ENCODE measurements at regions of chr12 and their contacts with region 1.

Region 1: DNA sequence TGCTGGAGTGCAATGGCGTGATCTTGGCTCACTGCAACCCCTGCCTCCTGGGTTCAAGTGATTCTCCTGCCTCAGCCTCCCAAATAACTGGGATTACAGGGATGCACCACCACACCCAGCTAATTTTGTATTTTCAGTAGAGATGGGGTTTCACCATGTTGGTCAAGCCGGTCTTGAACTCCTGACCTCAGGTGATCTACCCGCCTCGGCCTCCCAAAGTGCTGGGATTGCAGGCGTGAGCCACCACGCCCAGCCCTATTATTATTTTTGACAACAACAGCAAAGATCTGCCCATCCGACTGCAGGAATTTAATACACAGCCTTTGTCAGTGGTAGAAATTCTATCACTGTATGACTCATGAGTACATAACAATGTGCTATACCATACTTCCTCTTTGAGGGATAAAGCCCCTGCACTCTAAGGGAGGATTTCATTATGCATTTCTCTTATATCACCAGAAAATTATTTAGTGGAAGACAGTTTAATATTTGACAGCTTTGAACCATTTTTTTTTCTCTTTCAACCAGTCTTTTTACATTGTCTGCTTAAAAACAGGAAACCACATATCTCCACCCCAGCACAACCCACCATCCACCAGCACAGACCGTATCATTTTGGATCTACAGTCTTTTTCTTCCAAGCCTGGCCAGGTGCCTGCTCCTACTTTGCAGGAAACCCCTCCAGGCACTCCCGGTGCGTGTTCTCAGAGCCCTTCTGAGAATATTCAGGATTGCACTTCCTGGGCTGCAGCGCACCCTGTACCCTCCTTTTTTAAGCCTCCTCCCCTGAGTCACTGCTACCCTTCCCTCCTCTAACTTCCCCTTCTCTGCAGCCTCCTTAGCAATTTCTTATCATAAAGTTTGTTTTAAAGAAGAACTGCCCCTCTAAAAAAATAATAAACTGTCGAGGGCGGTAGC is 594 bp downstream of the ARHGDIB start:
- DNase-seq: peak; percentile 39
- H3K4me3 Mint-ChIP-seq: peak overlapping the region; percentile 98
- H3K27ac Mint-ChIP-seq: peak overlapping the region; percentile 100
- H3K4me1 Mint-ChIP-seq: peaks cover 43% of the 10 kb centered on the region
- H3K27me3 Mint-ChIP-seq: no peaks in the 10 kb centered on the region

Region 2: GRCh38 chr12:13196130-13196921 is 1764.5 kb before region 1 on chr12 and contains the start of gene EMP1:
- CTCF ChIA-PET with region 1: no interaction called
- intact Hi-C with region 1: loop called (anchors 5 kb)
- DNase-seq: peak; percentile 93
- H3K4me3 Mint-ChIP-seq: peak within 1 kb of the TSS; percentile 72
- H3K27ac Mint-ChIP-seq: peak within 1 kb of the TSS; percentile 38
- H3K4me1 Mint-ChIP-seq: peaks cover 20% of the 10 kb centered on the region
- H3K27me3 Mint-ChIP-seq: peaks cover 4% of the 10 kb centered on the region
- total RNA-seq, gene EMP1: 3.0 to 4.0 TPM

Region 3: DNA sequence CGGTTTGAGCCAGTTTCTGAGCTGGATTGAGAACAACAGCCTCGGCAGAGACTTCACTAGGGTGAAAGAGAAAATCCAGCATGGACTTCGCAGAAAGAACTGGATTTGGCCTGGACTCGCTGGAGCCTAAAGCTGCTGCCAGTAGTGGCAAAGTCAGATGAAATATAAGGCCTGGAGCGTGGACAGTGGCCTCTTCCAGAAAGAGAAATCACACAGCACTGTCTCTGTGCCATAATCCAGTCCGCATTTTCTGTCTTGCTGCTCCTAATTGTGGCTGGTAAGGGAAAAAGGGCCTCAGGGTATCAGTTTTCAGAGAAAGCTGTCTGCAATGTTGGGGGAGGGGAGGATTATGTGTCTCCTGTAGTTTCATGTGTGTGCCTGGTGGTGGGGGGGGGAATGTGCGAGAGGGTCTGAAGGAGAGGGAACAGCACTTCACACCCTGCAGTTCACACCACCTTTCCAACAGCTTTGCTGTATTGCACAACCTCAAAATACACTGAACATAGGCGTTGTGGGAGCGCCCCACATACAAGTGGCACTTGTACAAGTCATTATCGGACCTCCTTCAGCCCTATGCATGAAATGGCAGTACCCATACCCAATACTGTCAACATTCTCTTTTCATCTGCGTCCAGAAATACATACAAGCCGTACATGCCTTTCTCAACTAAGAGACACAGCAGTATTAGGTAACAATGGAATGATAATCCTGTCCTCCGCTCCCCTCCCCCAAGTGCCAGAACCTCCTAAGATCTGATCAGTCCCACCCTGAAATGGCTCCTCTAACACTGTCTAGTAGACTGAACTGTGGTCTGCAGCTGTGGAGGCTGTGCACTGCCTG is 702.9 kb before region 1 on chr12:
- CTCF ChIA-PET with region 1: no interaction called
- intact Hi-C with region 1: loop called (anchors 1 kb)
- DNase-seq: peak; percentile 99
- H3K4me3 Mint-ChIP-seq: peak overlapping the region; percentile 73
- H3K27ac Mint-ChIP-seq: peak overlapping the region; percentile 98
- H3K4me1 Mint-ChIP-seq: peaks cover 53% of the 10 kb centered on the region
- H3K27me3 Mint-ChIP-seq: no peaks in the 10 kb centered on the region

Region 4: GRCh38 chr12:14394317-14395073 is 566.3 kb before region 1 on chr12:
- CTCF ChIA-PET with region 1: no interaction called
- intact Hi-C with region 1: loop called (anchors 2 kb)
- DNase-seq: peak; percentile 62
- H3K4me3 Mint-ChIP-seq: peak overlapping the region; percentile 77
- H3K27ac Mint-ChIP-seq: peak overlapping the region; percentile 98
- H3K4me1 Mint-ChIP-seq: peaks cover 82% of the 10 kb centered on the region
- H3K27me3 Mint-ChIP-seq: no peaks in the 10 kb centered on the region

Region 5: DNA sequence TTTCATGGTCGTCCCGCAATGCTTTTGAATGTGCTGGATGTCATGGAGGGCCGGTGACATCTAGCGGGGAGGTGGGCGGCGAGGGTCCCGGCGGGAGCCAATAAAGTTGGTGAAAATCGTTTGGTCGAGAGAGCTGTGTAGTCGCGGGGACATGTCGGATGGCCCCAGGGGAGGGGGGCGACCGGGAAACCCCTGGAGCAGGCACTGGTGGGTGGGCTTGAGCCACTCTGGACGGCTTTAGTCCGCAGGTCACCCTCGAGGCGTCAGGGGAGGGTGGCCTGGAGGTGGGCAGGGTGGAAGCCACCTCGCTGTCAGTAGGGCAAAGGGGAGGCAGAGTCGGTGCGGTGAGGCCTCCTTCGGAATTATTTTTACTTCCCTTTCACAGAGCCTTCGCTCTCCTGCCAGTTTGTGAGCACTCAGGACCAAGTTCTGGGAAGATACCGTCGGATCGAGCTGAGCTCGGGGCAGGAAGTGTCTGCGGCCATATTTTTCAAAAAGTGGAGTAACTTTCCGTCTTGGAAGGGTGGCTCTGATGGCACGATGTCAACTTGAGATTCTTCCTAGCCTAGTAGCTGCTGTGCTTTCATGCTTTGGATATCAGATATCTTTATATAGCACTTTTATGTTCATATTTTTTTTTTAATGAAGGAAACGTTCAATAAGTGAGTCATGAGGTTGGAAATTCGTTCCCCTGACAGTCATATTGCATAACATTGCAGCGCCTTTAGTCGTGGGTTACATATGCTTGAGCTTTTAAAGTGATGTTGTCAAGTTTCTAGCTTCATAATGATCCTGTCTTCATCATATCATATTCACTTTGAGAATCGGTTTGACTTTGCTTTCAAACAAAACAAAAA is 185.7 kb before region 1 on chr12:
- CTCF ChIA-PET with region 1: interaction called, 3 read pairs
- intact Hi-C with region 1: loop called (anchors 1 kb)
- DNase-seq: peak; percentile 58
- H3K4me3 Mint-ChIP-seq: peak overlapping the region; percentile 95
- H3K27ac Mint-ChIP-seq: peak overlapping the region; percentile 94
- H3K4me1 Mint-ChIP-seq: peaks cover 36% of the 10 kb centered on the region
- H3K27me3 Mint-ChIP-seq: no peaks in the 10 kb centered on the region

Region 6: DNA sequence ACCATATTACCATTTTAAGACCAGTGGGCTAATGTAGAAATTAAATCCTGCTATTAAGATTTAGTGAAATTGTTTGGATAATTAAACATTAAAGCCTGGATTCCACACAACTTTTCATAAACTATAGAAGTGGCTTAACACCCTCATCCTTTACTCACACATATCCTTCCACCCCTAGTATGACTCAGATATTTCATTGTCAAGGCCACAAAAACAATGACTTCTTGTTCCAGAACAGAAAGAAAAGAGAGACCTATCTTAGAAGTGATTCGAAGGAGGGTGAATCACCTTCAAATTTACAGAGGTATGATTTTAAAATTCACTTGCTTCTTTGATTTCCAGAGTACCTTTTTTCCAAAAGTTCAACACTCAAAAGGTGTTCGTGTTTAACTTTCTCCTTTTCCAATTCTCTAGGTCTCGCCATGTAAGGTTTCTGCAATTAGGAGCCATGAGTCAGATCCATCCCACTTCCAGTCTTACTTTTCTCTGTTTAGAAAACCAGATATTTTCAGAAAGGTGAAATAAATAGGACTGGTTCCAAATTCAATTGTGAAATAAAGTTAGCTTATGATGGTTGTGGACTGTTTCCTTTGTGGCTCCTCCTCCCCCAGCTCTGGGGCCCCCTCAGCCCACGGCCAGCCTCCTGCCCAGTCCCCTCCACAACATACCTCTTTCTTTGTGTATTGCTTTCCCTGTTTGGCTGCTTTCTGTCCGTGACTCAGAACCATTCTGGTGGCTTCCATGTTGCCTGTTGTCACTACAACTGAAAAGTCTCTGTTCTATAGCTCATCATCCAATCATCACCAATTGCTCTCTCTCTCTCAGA is 50.5 kb before region 1 on chr12:
- CTCF ChIA-PET with region 1: no interaction called
- intact Hi-C with region 1: loop called (anchors 1 kb)
- DNase-seq: peak; percentile 59
- H3K4me3 Mint-ChIP-seq: peak overlapping the region; percentile 22
- H3K27ac Mint-ChIP-seq: peak overlapping the region; percentile 90
- H3K4me1 Mint-ChIP-seq: peaks cover 44% of the 10 kb centered on the region
- H3K27me3 Mint-ChIP-seq: no peaks in the 10 kb centered on the region

Region 7: DNA sequence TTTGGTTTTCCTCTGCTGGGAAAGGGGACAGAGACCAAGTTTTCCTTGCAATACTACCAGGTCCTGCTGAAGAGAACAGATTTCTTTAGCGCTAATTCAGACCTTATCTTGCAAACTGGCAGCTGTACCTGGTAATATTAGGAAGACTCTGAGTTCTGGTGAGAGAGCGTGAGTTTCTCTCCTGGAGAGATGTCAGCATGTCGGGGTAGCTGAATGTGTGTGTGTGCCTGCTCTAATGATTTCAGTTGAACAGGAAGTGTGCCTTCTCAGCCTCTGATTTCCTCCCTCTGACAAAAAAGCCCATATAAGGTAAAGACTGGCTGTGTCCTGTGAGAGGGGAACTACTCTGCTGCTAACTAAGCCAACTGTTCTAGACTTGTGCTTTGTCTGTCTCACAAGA is 12.1 kb before region 1 on chr12:
- CTCF ChIA-PET with region 1: interaction called, 5 read pairs
- intact Hi-C with region 1: loop called (anchors 1 kb)
- DNase-seq: peak; percentile 73
- H3K4me3 Mint-ChIP-seq: peak overlapping the region; percentile 71
- H3K27ac Mint-ChIP-seq: peak overlapping the region; percentile 95
- H3K4me1 Mint-ChIP-seq: peaks cover 82% of the 10 kb centered on the region
- H3K27me3 Mint-ChIP-seq: no peaks in the 10 kb centered on the region

Region 8: GRCh38 chr12:15044471-15044870 is 83.7 kb after region 1 on chr12:
- CTCF ChIA-PET with region 1: no interaction called
- intact Hi-C with region 1: no loop called
- DNase-seq: no peak
- H3K4me3 Mint-ChIP-seq: no peak overlapping the region
- H3K27ac Mint-ChIP-seq: no peak overlapping the region
- H3K4me1 Mint-ChIP-seq: peaks cover 3% of the 10 kb centered on the region
- H3K27me3 Mint-ChIP-seq: no peaks in the 10 kb centered on the region

Measured in activated naive CD4-positive, alpha-beta T cell treated with anti-CD3 and anti-CD28 coated beads for 36 hours (primary cell).